Astrocyte of the cerebellum (primary cell): ENCODE measurements at regions of chrX and their contacts with region 1.

Region 1: DNA sequence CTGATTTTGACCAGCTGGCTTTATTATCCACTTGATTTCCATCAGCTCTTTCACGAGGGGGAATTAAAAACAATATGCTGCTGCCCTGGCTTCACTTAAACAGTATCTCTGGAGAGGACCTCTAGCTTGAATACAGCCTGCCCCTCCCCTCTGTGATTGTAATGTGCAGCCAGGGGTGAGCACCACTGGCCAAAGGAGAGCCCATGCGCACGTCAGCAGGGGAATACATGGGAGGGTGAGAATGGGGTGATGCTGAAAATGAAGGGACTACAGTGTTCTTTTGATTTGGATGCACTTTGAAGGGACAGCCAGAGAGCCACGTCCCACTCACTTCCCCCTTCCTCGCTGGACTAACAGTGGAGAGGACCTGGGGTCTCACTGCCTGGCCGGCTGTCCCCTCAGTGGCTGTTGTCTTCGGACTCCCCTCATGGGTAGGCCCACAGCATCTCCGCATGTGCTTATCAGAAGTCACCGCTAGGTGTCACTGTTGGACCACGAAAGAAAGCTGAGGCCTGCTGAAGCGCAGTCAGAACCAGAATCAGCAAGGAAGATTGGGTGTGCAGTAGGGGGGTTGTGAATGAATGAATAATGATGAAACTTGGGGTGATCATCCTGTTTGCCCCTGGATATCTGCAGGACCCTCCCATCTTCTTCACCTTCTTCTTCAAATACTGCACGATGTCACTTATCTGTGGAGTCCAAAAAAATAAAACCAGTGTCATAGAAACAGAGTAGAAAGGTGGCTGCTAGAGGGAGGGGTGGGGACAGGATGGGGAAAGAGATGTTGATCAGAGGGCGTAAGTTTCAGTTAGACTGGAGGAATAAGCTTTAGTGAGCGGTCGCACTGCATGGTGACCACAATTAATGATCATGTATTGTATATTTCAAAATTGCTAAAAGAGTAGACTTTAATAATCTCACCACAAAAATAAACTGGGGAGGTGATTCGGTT is 32.8 kb downstream of the CLCN4 start:
- DNase-seq: peak; percentile 31
- H3K4me3 ChIP-seq: no peak overlapping the region
- CTCF ChIP-seq: peak; percentile 75

Region 2: DNA sequence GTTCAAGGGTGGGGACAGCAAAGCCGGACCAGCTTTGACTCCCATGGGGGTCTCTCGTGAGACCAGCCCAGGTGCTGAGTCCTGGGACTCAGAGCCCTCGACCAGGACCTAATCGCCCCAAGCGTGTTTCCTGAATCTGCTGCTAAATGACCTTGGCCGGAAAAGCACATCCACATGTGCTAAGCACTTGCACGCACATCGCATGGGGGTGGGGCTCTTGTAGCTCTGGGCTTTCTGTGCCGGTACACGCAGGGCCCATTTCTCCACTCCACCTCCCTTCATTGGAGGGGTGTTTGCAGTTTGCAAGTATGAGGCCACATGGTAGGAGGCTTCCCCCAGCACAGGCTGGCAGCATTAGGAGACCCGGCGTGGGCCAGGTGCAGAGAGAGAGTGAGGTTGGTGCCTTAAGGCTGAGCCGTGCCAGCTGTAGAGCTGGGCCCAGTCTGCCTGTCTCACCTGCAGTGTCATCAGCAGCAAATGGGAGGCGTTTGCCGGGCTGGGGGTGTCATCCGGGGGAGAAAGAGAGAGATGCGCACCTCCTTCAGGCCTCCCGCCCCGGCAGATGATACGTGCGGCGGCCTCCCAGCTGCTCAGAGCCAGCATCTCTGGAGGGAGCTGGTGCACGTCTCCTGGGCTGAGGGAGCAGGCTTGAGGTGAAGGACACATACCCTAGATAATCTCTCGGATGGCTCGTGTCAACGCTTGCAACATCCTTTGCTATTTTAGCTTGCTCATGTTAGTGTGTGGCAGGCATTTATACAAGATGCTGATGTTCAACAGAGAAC is 78.0 kb before region 1 on chrX:
- in situ Hi-C with region 1: no loop called
- DNase-seq: no peak
- H3K4me3 ChIP-seq: no peak overlapping the region
- CTCF ChIP-seq: no peak

Region 3: DNA sequence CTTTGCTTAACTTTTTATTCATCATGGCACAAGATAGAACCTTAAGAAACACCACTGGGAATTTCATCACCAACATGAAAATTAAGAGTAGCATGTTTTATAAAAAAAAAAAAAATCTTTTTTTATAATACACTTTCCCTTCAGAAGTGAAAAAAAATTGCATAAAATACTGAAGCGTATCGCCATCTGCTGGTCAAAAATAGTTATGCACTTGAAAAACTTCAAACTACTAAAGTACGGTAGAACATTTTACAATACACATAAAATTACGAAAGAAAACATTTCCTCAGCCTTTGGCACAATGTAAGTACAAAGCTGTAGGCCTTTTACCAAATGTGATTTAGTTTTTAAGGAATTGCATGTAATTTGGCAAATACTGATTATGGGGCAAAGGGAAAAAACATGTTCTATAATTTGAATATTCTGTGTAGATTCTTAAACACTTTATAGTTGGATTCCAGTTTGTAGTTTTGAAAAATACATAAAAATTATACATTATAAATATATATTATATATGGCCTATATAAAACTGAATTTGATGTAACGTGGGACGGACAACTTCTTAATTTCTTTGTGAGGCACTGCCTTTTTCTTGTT is 948.0 kb after region 1 on chrX:
- in situ Hi-C with region 1: loop called (anchors 10 kb)
- DNase-seq: peak; percentile 22
- H3K4me3 ChIP-seq: no peak overlapping the region
- CTCF ChIP-seq: peak; percentile 41